ENCODE measurements at regions of chr22 and their contacts with region 1.

Region 1: DNA sequence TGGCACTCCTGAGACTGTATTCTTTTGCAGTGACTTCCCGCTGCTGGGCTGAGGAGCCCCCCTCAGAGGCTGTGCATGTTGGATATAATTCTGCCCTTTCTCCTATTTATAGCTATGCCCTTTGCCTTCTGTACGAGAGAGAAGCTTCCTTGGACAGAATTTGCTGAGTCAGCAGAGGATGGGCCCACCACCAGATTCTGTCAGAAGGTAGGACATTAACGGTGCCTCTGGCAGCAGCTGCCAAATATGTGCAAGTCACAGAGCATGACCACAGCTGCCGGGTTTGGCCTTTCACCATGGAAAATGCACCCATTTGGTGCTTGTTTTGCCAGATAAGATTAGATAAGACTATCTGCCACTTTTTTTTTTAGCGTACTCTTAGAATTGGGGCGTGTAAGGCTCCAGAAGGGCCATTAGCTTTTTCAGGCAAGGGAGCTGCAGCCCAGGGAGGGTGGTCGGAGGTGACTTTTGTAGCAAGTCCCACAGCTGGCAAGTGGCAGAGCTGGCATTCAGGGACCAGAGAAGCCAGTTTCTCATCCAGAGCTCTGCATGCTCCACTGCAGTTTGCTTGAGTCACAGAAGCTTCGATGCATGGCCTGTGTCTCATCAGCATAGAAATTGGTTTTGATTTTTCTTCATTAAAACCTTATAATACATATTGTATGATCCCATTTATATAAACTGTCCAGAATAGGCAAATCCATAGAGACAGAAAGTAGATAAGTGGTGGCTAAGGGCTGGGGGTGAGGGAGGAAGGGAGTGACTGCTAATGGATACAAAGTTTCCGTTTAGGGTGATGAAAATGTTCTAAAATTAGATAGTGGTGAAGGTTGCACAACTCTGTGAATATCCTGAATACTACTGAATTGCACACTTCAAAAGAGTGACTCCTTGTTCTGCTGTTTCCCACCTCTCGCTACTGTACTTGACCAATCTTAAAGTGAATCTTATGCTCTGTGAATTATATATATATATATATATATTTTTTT is 15.8 kb downstream of the UPB1 start:
- DNase-seq: peak; percentile 18 to 59 (median 28)
- ATAC-seq: peak; percentile 60
- H3K4me3 ChIP-seq: no peak overlapping the region
- H3K27ac ChIP-seq: peak overlapping the region; percentile 57; the same call in 2 of the 3 replicates
- H3K4me1 ChIP-seq: peaks cover 13 to 24% of the 10 kb centered on the region in 2 experiments
- H3K27me3 ChIP-seq: no peaks in the 10 kb centered on the region
- CTCF ChIP-seq: no peak
- EP300 ChIP-seq: peak; percentile 44
- POLR2A ChIP-seq: no peak
- RAD21 ChIP-seq: no peak

Region 2: GRCh38 chr22:24417901-24418641 is 92.9 kb before region 1 on chr22:
- CTCF ChIA-PET with region 1: no interaction called
- POLR2A ChIA-PET with region 1: interaction called, 3 read pairs
- in situ Hi-C with region 1: loop called (anchors 5 kb)
- intact Hi-C with region 1: no loop called
- DNase-seq: no peak
- ATAC-seq: no peak
- H3K4me3 ChIP-seq: no peak overlapping the region
- H3K27ac ChIP-seq: no peak overlapping the region
- H3K4me1 ChIP-seq: peaks cover 0 to 7% of the 10 kb centered on the region in 2 experiments; a peak in 2 of 5 replicates
- H3K27me3 ChIP-seq: no peaks in the 10 kb centered on the region
- CTCF ChIP-seq: no peak
- EP300 ChIP-seq: no peak
- POLR2A ChIP-seq: no peak
- RAD21 ChIP-seq: no peak

Region 3: GRCh38 chr22:24466716-24467328 is 44.1 kb before region 1 on chr22:
- CTCF ChIA-PET with region 1: no interaction called
- POLR2A ChIA-PET with region 1: no interaction called
- in situ Hi-C with region 1: no loop called
- intact Hi-C with region 1: no loop called
- DNase-seq: peak in 2 of 4 experiments; percentile 27 to 60
- ATAC-seq: peak; percentile 42; the same call in 1 of the 3 replicates
- H3K4me3 ChIP-seq: no peak overlapping the region
- H3K27ac ChIP-seq: no peak overlapping the region
- H3K4me1 ChIP-seq: peaks cover 0 to 12% of the 10 kb centered on the region in 2 experiments; a peak in 2 of 5 replicates
- H3K27me3 ChIP-seq: no peaks in the 10 kb centered on the region
- CTCF ChIP-seq: no peak
- EP300 ChIP-seq: no peak
- POLR2A ChIP-seq: no peak
- RAD21 ChIP-seq: no peak

Region 4: DNA sequence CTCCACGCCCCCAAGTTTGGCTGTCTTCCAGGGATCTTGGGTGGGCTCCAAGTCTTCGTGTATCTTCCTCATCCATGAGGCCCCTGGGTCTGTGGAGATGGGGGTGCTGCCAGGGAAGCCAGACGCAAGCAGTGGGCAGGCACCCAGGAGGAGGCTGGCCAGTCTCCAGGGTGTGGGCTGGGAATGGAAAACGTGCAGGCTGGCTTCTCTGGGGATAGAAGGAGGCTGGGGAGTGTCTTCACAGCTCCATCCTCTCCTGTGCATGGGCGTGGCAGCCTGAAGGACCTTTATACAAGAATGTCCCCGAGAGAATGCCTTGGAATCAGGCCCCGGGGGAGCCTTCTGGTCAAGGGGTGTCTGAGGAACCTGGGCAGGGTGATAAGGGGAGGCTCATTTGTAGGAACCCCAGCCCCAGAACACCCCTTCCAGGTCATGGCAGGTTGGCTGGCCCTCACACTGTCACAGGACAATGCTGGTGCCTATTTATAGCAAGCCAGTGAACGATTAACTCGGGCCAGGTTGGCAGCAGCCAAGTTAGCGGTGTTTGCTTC is 309.1 kb after region 1 on chr22:
- CTCF ChIA-PET with region 1: no interaction called
- POLR2A ChIA-PET with region 1: no interaction called
- in situ Hi-C with region 1: no loop called
- intact Hi-C with region 1: no loop called
- DNase-seq: no peak
- ATAC-seq: no peak
- H3K4me3 ChIP-seq: no peak overlapping the region
- H3K27ac ChIP-seq: no peak overlapping the region
- H3K4me1 ChIP-seq: no peaks in the 10 kb centered on the region
- H3K27me3 ChIP-seq: peaks cover 0 to 21% of the 10 kb centered on the region in 2 experiments; a peak in 3 of 5 replicates
- CTCF ChIP-seq: no peak
- EP300 ChIP-seq: no peak
- POLR2A ChIP-seq: no peak
- RAD21 ChIP-seq: no peak

Measured in K562 (cell line).